GM12878 (cell line): ENCODE measurements at regions of chr16 and their contacts with region 1.

Region 1: GRCh38 chr16:84585886-84586285 is 32.0 kb downstream of the COTL1 start:
- DNase-seq: no peak
- ATAC-seq: peak; percentile 96
- H3K4me3 ChIP-seq: peak overlapping the region; percentile 45; the same call in 1 of the 2 replicates
- H3K27ac ChIP-seq: peak overlapping the region; percentile 24
- H3K4me1 ChIP-seq: peaks cover 19% of the 10 kb centered on the region
- H3K27me3 ChIP-seq: no peaks in the 10 kb centered on the region
- CTCF ChIP-seq: no peak
- EP300 ChIP-seq: no peak
- POLR2A ChIP-seq: peak; percentile 53; the same call in 1 of the 2 replicates
- RAD21 ChIP-seq: no peak

Region 2: GRCh38 chr16:84518748-84519341 is 67.0 kb before region 1 on chr16:
- CTCF ChIA-PET with region 1: interaction called, 5 read pairs
- POLR2A ChIA-PET with region 1: no interaction called
- RAD21 ChIA-PET with region 1: interaction called, 3 read pairs
- SMC1A ChIA-PET with region 1: interaction called, 183 read pairs
- in situ Hi-C with region 1: no loop called
- intact Hi-C with region 1: no loop called
- DNase-seq: no peak
- ATAC-seq: no peak
- H3K4me3 ChIP-seq: no peak overlapping the region
- H3K27ac ChIP-seq: no peak overlapping the region
- H3K4me1 ChIP-seq: peaks cover 34% of the 10 kb centered on the region
- H3K27me3 ChIP-seq: no peaks in the 10 kb centered on the region
- CTCF ChIP-seq: no peak
- EP300 ChIP-seq: no peak
- POLR2A ChIP-seq: no peak
- RAD21 ChIP-seq: no peak